Left lung (tissue), 14 donors: ENCODE measurements at regions of chr22 and their contacts with region 1.

Region 1: GRCh38 chr22:41403532-41404318 is 22.0 kb downstream of the TEF start:
- DNase-seq: peak; percentile 73 to 93 (median 88)
- ATAC-seq: peak; percentile 96
- H3K4me3 ChIP-seq: no peak overlapping the region
- H3K27ac ChIP-seq: no peak overlapping the region
- H3K4me1 ChIP-seq: peaks cover 9 to 22% of the 10 kb centered on the region in 2 donors
- H3K27me3 ChIP-seq: no peaks in the 10 kb centered on the region
- CTCF ChIP-seq: peak; percentile 95

Region 2: DNA sequence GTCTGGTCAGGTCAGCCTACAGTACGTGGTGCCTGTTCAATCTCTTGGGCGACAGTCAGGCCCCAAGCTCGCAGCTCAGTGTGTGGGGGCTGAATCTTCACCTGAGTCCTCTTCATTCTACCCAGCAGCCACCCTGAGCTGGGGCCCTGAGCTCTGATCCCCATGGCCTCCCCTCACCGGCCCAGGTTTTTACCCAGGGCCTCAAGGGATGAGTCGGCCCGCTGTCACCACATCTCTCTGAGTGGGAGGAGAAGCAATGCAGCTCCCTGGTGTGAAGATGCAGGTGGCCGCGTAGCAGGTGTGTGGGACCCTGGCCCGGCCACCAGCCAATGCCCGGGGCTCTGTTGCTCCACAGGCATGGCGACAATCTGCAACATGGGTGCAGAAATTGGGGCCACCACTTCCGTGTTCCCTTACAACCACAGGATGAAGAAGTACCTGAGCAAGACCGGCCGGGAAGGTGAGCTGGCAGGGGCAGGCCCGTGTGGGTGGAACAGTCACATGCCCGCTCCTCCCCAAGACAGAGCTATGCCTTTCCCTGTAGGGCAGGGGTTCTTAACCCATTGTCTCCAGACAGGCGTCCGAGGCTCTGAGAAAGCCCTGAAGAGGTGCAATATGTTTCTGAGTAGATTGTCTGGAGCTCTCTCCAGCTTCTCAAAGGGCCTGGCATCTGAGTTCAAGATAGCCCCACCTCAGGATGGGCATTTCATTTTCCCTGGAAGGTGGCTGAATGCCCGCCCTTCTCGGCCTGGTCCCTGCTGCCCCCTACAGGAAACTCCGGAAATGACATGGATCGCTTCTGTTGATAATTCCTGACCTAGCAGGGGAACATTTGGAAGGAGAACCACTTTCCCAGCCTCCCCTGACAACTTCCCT is 113.7 kb after region 1 on chr22:
- intact Hi-C with region 1: loop called (anchors 5 to 10 kb)
- DNase-seq: peak in 2 of 4 donors; percentile 63 to 66
- ATAC-seq: peak; percentile 86
- H3K4me3 ChIP-seq: no peak overlapping the region
- H3K27ac ChIP-seq: no peak overlapping the region
- H3K4me1 ChIP-seq: peaks cover 4 to 6% of the 10 kb centered on the region in 2 donors
- H3K27me3 ChIP-seq: no peaks in the 10 kb centered on the region
- CTCF ChIP-seq: peak; percentile 72 to 79

Region 3: DNA sequence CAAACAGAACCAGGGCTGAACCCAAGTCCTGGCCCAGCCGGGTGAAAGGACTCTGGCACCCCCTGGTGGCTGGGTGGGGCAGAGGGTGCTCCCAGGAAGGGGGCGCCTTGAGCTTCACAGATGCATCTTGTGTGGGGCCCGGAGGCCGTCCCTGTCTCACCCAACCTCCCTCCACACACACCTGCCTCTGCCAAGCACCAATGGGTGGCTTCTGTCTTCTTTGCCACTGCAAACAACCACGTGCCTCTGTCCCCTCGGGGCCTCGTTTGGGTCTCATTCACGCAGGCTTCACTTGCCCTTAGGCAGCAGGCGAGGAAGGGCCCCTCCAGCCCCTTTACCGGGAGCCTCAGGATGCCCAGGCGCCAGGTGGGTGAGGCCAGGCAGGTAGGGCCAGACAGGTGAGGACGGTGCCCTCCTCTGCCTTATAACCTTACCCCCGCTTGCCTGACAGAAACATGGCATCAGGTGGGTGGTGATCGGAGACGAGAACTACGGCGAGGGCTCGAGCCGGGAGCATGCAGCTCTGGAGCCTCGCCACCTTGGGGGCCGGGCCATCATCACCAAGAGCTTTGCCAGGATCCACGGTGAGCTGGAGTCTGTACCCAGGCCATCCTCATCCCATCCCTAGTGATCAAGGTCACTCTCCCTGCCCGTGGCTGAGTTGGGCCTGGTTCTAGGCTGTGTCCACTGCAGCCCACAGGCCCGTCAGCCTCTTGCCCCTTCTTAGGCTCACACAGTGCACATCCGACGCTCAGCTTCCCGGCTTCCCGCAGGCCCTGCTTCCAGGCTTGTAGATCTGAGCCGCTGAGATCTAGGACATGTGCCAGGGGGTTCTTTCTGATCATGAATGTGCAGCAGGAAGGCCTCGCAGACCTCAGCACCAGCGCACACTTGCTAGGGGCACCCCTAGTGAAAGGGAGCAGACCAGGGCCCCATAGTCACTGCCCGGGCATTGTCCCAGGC is 123.4 kb after region 1 on chr22:
- intact Hi-C with region 1: loop called in 1 of 2 experiments (anchors 10 kb)
- DNase-seq: peak in 1 of 4 donors; percentile 88
- ATAC-seq: peak; percentile 38
- H3K4me3 ChIP-seq: no peak overlapping the region
- H3K27ac ChIP-seq: no peak overlapping the region
- H3K4me1 ChIP-seq: peaks cover 11 to 20% of the 10 kb centered on the region in 2 donors
- H3K27me3 ChIP-seq: no peaks in the 10 kb centered on the region
- CTCF ChIP-seq: peak; percentile 79